A549 (cell line): ENCODE measurements at regions of chr1 and their contacts with region 1.

Region 1: GRCh38 chr1:225911191-225912130 is 12.6 kb downstream of the PYCR2 start:
- DNase-seq: peak; percentile 54 to 74
- ATAC-seq: peak; percentile 86 to 96
- H3K4me3 ChIP-seq: peak overlapping the region; percentile 29
- H3K27ac ChIP-seq: peak overlapping the region; percentile 62 to 79
- H3K4me1 ChIP-seq: 0 out of 3 replicates have a peak, but pooled peaks cover 3% of the 10 kb centered on the region
- CTCF ChIP-seq: peak; percentile 99
- EP300 ChIP-seq: no peak
- POLR2A ChIP-seq: no peak
- RAD21 ChIP-seq: peak; percentile 73 to 95

Region 2: DNA sequence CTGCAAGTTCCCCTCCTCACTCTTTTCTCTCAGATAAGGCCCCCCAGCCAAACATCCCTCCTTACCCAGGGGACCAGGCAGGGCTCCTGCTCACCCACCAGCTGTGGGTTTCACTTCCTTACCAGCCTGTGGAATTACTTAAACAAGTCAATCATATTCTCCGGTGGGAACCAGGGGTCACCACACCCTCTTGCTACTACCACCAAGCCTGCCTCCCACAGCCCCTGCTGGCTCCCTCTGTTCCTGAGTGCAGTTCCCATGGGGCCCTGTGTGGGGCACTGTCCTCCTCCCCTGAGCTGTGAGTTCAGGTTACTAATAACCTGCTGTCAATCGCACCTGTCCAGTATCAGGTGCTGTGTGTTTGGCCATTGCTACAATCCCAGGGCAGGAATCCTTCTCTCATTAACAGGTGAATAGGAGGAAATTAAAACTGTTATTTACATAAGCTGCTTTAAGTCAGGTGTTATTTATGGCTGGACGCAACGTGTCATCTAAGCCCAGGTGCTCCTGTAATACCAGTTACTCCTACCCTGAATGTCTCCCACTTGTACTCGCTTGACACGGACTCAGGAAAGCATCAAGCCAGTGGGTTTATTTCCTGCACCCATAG is 430.5 kb before region 1 on chr1:
- CTCF ChIA-PET with region 1: interaction called, 196 read pairs
- POLR2A ChIA-PET with region 1: no interaction called
- DNase-seq: peak; percentile 54 to 76
- ATAC-seq: peak; percentile 79 to 87
- H3K4me3 ChIP-seq: no peak overlapping the region
- H3K27ac ChIP-seq: no peak overlapping the region; a peak in 1 of 6 replicates
- H3K4me1 ChIP-seq: no peaks in the 10 kb centered on the region
- CTCF ChIP-seq: peak; percentile 72
- EP300 ChIP-seq: no peak
- POLR2A ChIP-seq: no peak
- RAD21 ChIP-seq: peak; percentile 79 to 85

Region 3: GRCh38 chr1:225809842-225810578 is 101.5 kb before region 1 on chr1 and contains the start of gene EPHX1:
- CTCF ChIA-PET with region 1: interaction called, 13 read pairs
- POLR2A ChIA-PET with region 1: interaction called, 5 read pairs
- DNase-seq: peak; percentile 87 to 97
- ATAC-seq: peak; percentile 85 to 86
- H3K4me3 ChIP-seq: peak within 1 kb of the TSS; percentile 86
- H3K27ac ChIP-seq: peak within 1 kb of the TSS; percentile 93 to 99
- H3K4me1 ChIP-seq: peaks cover 40% of the 10 kb centered on the region
- CTCF ChIP-seq: peak; percentile 30; the same call in 2 of the 3 replicates
- EP300 ChIP-seq: 0 out of 5 replicates have a peak, but pooled peaks of 1 of the 2 experiments have one; percentile 8
- POLR2A ChIP-seq: peak; percentile 97
- RAD21 ChIP-seq: peak; percentile 25 to 37; a peak in 3 of 5 replicates
- polyA plus RNA-seq, gene EPHX1: 150 and 212 TPM in 2 replicates

Region 4: DNA sequence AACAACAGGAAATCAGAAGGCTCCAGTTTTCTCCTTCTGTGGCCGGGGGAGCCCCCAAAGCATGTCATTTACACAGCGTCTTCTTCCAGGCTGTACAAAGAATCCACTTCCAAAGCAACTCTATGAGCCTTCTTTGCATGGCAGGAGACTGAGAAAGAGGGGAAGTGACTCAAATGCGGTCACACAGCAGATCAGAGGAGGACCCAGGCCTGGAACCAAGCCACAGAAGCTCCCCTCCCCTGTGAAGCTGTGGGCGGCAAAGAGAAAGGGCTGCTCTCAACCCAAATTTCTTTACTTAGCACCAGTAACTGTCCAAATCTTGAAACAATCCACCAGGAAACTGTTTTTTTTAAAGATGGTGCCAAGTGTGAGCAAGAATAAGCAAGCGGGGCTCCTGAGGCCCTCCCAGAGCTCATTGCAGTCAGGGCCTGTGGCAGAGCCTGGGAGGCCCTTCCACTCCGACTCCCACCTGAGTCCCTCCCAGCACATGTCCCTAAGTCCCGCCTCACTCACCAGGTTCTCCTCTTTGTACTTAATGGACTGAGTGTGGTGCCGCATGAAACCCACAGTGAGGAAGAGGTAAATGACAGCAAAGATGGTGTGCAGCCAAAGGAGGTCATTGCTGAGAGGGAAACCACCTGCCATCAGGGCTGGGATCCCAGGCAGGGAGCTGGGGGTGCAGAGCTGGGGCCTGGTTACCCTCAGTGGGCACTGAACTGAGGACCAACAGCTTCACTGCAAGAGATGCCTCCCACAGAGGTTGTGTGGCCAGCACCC is 45.2 kb before region 1 on chr1:
- CTCF ChIA-PET with region 1: interaction called, 14 read pairs
- POLR2A ChIA-PET with region 1: no interaction called
- DNase-seq: no peak
- ATAC-seq: no peak
- H3K4me3 ChIP-seq: no peak overlapping the region
- H3K27ac ChIP-seq: no peak overlapping the region
- H3K4me1 ChIP-seq: peaks cover 23% of the 10 kb centered on the region
- CTCF ChIP-seq: no peak
- EP300 ChIP-seq: no peak
- POLR2A ChIP-seq: no peak
- RAD21 ChIP-seq: no peak

Region 5: GRCh38 chr1:225896937-225897549 is 14.4 kb before region 1 on chr1:
- CTCF ChIA-PET with region 1: interaction called, 207 read pairs
- POLR2A ChIA-PET with region 1: no interaction called
- DNase-seq: peak; percentile 37 to 52
- ATAC-seq: peak; percentile 82 to 85
- H3K4me3 ChIP-seq: no peak overlapping the region
- H3K27ac ChIP-seq: peak overlapping the region in 1 of 2 experiments; percentile 18; a peak in 1 of 6 replicates
- H3K4me1 ChIP-seq: peaks cover 6% of the 10 kb centered on the region
- CTCF ChIP-seq: no peak
- EP300 ChIP-seq: no peak
- POLR2A ChIP-seq: no peak
- RAD21 ChIP-seq: no peak

Region 6: DNA sequence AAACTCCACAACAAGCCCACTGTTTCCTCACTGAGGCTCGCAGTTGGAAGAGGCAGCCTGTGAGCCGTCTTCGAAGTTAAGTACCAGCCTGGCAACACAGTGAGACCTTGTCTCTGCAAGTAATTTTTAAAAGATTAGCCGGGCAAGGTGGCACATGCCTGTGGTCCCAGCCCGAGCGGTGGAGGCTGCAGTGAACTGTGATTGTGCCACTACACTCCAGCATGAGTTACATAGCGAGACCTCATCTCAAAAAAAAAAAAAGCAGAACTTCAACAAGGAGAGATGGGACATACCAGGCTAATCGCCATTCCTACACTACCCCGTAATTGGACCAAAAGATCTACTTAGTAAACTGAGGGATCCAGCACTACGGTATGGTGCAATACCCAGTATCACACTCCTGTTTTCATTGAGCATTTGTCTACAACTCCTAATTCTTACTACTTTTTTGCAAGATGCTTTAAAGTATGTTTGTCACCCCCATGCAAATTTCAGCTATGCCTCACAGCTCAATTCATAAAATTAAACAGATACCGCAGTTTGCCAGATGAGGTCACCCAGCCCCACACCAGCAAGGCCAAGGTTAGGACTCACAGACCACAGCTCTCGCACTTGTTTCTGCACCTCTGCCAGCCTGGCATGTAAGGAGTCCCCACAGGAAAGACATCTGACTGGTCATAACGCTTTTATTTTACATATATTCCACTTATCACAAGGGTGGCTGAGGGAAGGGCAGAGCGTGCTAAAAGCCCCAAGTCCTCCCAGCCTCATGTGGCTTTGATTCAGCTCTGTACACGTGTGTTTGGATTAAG is 66.7 kb after region 1 on chr1:
- CTCF ChIA-PET with region 1: interaction called, 13 read pairs
- POLR2A ChIA-PET with region 1: no interaction called
- DNase-seq: no peak
- ATAC-seq: 0 out of 6 replicates have a peak, but pooled peaks of 1 of the 2 experiments have one; percentile 27
- H3K4me3 ChIP-seq: no peak overlapping the region
- H3K27ac ChIP-seq: no peak overlapping the region
- H3K4me1 ChIP-seq: no peaks in the 10 kb centered on the region
- CTCF ChIP-seq: no peak
- EP300 ChIP-seq: no peak
- POLR2A ChIP-seq: no peak
- RAD21 ChIP-seq: no peak

Region 7: GRCh38 chr1:226135059-226135651 is 223.7 kb after region 1 on chr1:
- CTCF ChIA-PET with region 1: no interaction called
- POLR2A ChIA-PET with region 1: no interaction called
- DNase-seq: no peak
- ATAC-seq: peak; percentile 23 to 46; a peak in 4 of 6 replicates
- H3K4me3 ChIP-seq: no peak overlapping the region
- H3K27ac ChIP-seq: peak overlapping the region in 1 of 2 experiments; percentile 59; a peak in 3 of 6 replicates
- H3K4me1 ChIP-seq: 0 out of 3 replicates have a peak, but pooled peaks cover 5% of the 10 kb centered on the region
- CTCF ChIP-seq: no peak
- EP300 ChIP-seq: no peak
- POLR2A ChIP-seq: no peak
- RAD21 ChIP-seq: no peak